Endothelial cell of umbilical vein (primary cell): ENCODE measurements at regions of chr16 and their contacts with region 1.

Region 1: DNA sequence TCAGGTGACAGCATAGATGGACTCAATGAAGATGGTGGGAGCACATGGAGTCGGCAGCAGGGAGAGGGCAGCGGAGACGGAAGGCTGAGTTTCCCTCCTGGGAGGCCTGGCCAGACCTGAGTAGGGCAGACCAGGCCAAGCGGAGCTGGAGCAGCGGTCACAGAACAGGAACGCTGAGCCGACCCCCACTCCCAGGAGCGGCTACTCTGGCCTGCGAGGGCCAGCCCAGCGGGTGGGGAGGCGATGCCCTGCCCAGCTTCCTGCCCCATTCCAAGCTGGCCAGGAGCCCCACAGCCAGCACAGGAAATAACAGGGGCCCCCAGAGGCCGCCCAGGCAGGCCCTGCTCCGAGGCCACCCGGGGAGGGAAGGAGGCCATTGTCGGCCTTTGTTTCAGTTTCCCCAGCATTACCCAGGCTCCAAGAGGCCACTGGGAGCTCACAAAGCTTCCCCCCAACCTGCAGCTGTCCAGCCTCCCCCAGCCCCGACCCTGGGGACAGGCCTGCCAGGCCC is 79.8 kb downstream of the ZNF423 start:
- DNase-seq: peak; percentile 67
- H3K4me3 ChIP-seq: no peak overlapping the region
- H3K27ac ChIP-seq: no peak overlapping the region
- H3K4me1 ChIP-seq: peaks cover 2% of the 10 kb centered on the region
- H3K27me3 ChIP-seq: no peaks in the 10 kb centered on the region
- CTCF ChIP-seq: peak in 1 of 2 donors; percentile 3
- POLR2A ChIP-seq: no peak

Region 2: GRCh38 chr16:49734331-49734730 is 41.8 kb before region 1 on chr16:
- CTCF ChIA-PET with region 1: no interaction called
- POLR2A ChIA-PET with region 1: no interaction called
- dilution Hi-C with region 1: no loop called
- intact Hi-C with region 1: loop called (anchors 1 kb)
- DNase-seq: no peak
- H3K4me3 ChIP-seq: no peak overlapping the region
- H3K27ac ChIP-seq: no peak overlapping the region
- H3K4me1 ChIP-seq: no peaks in the 10 kb centered on the region
- H3K27me3 ChIP-seq: no peaks in the 10 kb centered on the region
- CTCF ChIP-seq: no peak
- POLR2A ChIP-seq: no peak

Region 3: GRCh38 chr16:49800876-49801275 is 24.7 kb after region 1 on chr16:
- CTCF ChIA-PET with region 1: no interaction called
- POLR2A ChIA-PET with region 1: no interaction called
- dilution Hi-C with region 1: no loop called
- intact Hi-C with region 1: no loop called
- DNase-seq: no peak
- H3K4me3 ChIP-seq: no peak overlapping the region
- H3K27ac ChIP-seq: no peak overlapping the region
- H3K4me1 ChIP-seq: no peaks in the 10 kb centered on the region
- H3K27me3 ChIP-seq: no peaks in the 10 kb centered on the region
- CTCF ChIP-seq: no peak
- POLR2A ChIP-seq: no peak